Calu3 (cell line): ENCODE measurements at regions of chr5 and their contacts with region 1.

Region 1: GRCh38 chr5:100852988-100853449 is 50.1 kb downstream of the ST8SIA4 start:
- DNase-seq: no peak
- H3K4me3 Mint-ChIP-seq: no peak overlapping the region
- H3K27ac Mint-ChIP-seq: no peak overlapping the region
- H3K4me1 Mint-ChIP-seq: no peaks in the 10 kb centered on the region
- H3K27me3 Mint-ChIP-seq: no peaks in the 10 kb centered on the region
- CTCF ChIP-seq: no peak

Region 2: GRCh38 chr5:100864931-100865330 is 11.9 kb after region 1 on chr5:
- CTCF ChIA-PET with region 1: no interaction called
- intact Hi-C with region 1: loop called (anchors 2 kb)
- DNase-seq: peak; percentile 5
- H3K4me3 Mint-ChIP-seq: no peak overlapping the region
- H3K27ac Mint-ChIP-seq: peak overlapping the region; percentile 41
- H3K4me1 Mint-ChIP-seq: peaks cover 14% of the 10 kb centered on the region
- H3K27me3 Mint-ChIP-seq: no peaks in the 10 kb centered on the region
- CTCF ChIP-seq: no peak

Region 3: DNA sequence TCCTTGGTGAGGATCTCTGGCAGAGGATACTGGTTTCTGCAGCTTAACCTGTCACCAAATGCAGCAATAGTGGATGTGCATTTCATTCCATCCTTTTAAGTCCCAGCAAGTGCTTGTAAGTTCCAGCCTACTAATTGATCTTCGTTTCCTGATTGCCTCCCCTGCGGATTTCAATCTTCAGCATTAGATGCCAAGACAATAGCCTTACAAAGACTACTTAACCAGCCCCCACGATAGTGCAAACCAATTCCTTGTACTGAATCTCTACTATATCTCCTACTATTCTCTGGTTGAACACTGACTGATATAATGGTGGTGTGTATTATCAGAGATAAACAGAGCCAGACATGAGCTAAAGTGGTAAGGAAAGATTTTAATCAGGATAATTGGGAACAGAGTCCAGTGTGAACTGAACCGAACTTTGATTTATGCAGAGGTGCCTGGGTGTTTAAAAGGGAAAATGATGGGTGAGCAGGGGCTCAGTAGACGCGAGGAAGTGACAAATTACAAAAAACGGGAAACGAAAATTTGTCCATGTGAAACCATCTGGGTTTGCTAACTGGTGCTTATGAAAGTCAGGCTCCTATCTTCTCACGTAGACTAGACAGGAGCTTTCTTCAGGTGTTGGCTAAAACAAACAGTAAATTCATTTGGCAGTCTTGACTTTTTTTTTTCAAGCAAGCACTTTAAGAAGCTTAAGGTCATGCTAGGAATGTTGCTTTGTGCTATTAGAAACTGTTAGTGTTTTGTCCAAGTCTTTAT is 156.9 kb after region 1 on chr5:
- CTCF ChIA-PET with region 1: no interaction called
- intact Hi-C with region 1: no loop called
- DNase-seq: no peak
- H3K4me3 Mint-ChIP-seq: no peak overlapping the region
- H3K27ac Mint-ChIP-seq: peak overlapping the region; percentile 8
- H3K4me1 Mint-ChIP-seq: peaks cover 15% of the 10 kb centered on the region
- H3K27me3 Mint-ChIP-seq: no peaks in the 10 kb centered on the region
- CTCF ChIP-seq: no peak

Region 4: GRCh38 chr5:102196481-102196880 is 1343.5 kb after region 1 on chr5:
- CTCF ChIA-PET with region 1: interaction called, 12 read pairs
- intact Hi-C with region 1: no loop called
- DNase-seq: no peak
- H3K4me3 Mint-ChIP-seq: no peak overlapping the region
- H3K27ac Mint-ChIP-seq: no peak overlapping the region
- H3K4me1 Mint-ChIP-seq: no peaks in the 10 kb centered on the region
- H3K27me3 Mint-ChIP-seq: no peaks in the 10 kb centered on the region
- CTCF ChIP-seq: no peak